Naive thymus-derived CD4-positive, alpha-beta T cell (primary cell): ENCODE measurements at regions of chr12 and their contacts with region 1.

Region 1: DNA sequence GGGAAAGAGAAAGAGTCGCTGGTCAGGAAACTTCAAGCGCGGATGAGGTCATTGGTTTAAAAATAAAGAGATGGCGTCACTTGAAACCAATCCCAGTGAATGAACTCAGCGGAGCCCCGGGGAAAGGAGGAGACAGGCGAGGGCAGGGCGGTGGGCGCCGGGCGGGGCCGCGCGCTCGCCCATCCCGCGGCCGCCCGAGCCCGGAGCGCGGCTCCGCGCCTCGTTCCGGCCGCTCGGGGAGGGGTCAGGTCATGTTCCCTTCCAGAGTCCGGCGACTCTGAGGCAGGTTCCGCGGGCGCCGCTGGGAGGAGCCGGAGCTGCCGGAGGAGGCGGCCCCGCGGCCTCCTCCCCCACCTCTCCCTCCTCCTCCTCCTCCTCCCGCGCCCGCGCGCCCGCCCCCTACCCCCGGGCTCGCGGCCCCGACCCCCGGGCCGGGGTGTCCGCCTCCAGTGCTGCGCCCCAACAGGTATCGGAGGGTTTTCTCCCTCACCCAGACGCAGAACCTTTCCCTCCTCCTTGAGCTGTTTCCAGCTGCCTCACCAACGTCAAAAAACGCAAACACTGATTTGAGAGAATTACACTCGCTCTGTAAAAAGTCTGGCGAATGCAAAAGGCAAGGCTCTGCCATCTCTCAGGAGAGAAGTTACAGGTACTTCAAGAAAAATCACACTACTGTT is at the start of gene DUSP16:
- DNase-seq: peak; percentile 75 to 92 (median 88)
- ATAC-seq: peak; percentile 85
- H3K4me3 ChIP-seq: peak within 1 kb of the TSS; percentile 62
- H3K4me3 Mint-ChIP-seq: peak within 1 kb of the TSS; percentile 87 to 97 (median 92)
- H3K27ac ChIP-seq: peak within 1 kb of the TSS; percentile 92
- H3K27ac Mint-ChIP-seq: peak within 1 kb of the TSS; percentile 94 to 100 (median 99)
- H3K4me1 ChIP-seq: peaks cover 14 to 16% of the 10 kb centered on the region in 2 donors
- H3K4me1 Mint-ChIP-seq: peaks cover 14 to 50% (median 37%) of the 10 kb centered on the region in 7 donors
- H3K27me3 ChIP-seq: no peaks in the 10 kb centered on the region
- H3K27me3 Mint-ChIP-seq: no peaks in the 10 kb centered on the region
- total RNA-seq, gene DUSP16: 26.8 to 42.8 (median 38.9) TPM

Region 2: DNA sequence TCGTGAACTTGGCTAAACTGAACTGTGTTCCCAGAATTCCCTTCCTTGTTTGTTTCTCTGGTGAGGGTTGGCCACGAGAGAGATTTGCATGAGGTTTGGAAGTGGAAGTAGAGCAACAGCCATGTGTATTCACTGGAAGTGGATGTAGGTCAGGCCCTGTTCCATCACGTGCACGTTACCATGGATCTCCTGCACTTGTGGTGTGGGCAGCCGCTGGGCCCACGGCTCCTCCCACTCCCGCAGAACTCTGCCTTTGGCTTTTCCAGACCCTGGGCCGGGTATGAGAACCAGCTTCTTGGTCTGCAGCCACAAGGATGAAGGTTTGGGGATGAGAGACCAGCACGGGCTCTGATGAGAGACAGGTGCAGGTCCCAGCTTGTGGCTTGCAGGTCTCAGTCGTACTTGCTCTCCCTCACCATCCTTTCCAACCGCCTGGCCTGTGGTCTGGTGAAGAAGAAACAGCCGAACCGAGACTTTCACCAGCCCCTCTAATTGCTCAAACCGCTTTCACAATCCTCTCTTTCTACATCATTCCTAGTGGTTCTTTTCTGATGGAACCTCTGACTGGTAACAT is 94.9 kb before region 1 on chr12:
- CTCF ChIA-PET with region 1: interaction called, 4 read pairs
- POLR2A ChIA-PET with region 1: interaction called, 7 read pairs
- intact Hi-C with region 1: loop called in 1 of 2 experiments (anchors 1 kb)
- DNase-seq: peak in 3 of 9 donors; percentile 15 to 37 (median 35)
- ATAC-seq: peak; percentile 38
- H3K4me3 ChIP-seq: no peak overlapping the region
- H3K4me3 Mint-ChIP-seq: peak overlapping the region in 9 of 10 donors; percentile 16 to 70 (median 50)
- H3K27ac ChIP-seq: peak overlapping the region; percentile 75
- H3K27ac Mint-ChIP-seq: peak overlapping the region; percentile 89 to 99 (median 96)
- H3K4me1 ChIP-seq: peaks cover 29 to 39% of the 10 kb centered on the region in 2 donors
- H3K4me1 Mint-ChIP-seq: peaks cover 19 to 63% (median 52%) of the 10 kb centered on the region in 7 donors
- H3K27me3 ChIP-seq: no peaks in the 10 kb centered on the region
- H3K27me3 Mint-ChIP-seq: no peaks in the 10 kb centered on the region

Region 3: GRCh38 chr12:12527820-12528296 is 34.9 kb before region 1 on chr12:
- CTCF ChIA-PET with region 1: no interaction called
- POLR2A ChIA-PET with region 1: no interaction called
- intact Hi-C with region 1: loop called (anchors 1 to 5 kb)
- DNase-seq: peak in 5 of 9 donors; percentile 23 to 38 (median 23)
- ATAC-seq: peak; percentile 53
- H3K4me3 ChIP-seq: no peak overlapping the region
- H3K4me3 Mint-ChIP-seq: peak overlapping the region; percentile 44 to 65 (median 52)
- H3K27ac ChIP-seq: peak overlapping the region; percentile 70
- H3K27ac Mint-ChIP-seq: peak overlapping the region; percentile 80 to 96 (median 90)
- H3K4me1 ChIP-seq: peaks cover 16 to 33% of the 10 kb centered on the region in 2 donors
- H3K4me1 Mint-ChIP-seq: peaks cover 19 to 68% (median 50%) of the 10 kb centered on the region in 7 donors
- H3K27me3 ChIP-seq: no peaks in the 10 kb centered on the region
- H3K27me3 Mint-ChIP-seq: no peaks in the 10 kb centered on the region

Region 4: GRCh38 chr12:12622418-12622817 is 59.7 kb after region 1 on chr12:
- CTCF ChIA-PET with region 1: interaction called, 5 read pairs
- POLR2A ChIA-PET with region 1: interaction called, 4 read pairs
- intact Hi-C with region 1: loop called in 1 of 2 experiments (anchors 1 kb)
- DNase-seq: peak in 7 of 9 donors; percentile 44 to 76 (median 65)
- ATAC-seq: peak; percentile 87
- H3K4me3 ChIP-seq: peak overlapping the region; percentile 29
- H3K4me3 Mint-ChIP-seq: peak overlapping the region; percentile 1 to 79 (median 62)
- H3K27ac ChIP-seq: peak overlapping the region; percentile 72
- H3K27ac Mint-ChIP-seq: peak overlapping the region; percentile 70 to 95 (median 86)
- H3K4me1 ChIP-seq: peaks cover 27 to 40% of the 10 kb centered on the region in 2 donors
- H3K4me1 Mint-ChIP-seq: peaks cover 34 to 91% (median 83%) of the 10 kb centered on the region in 7 donors
- H3K27me3 ChIP-seq: no peaks in the 10 kb centered on the region
- H3K27me3 Mint-ChIP-seq: no peaks in the 10 kb centered on the region

Region 5: GRCh38 chr12:12696562-12697383 is 134.1 kb after region 1 on chr12:
- CTCF ChIA-PET with region 1: no interaction called
- POLR2A ChIA-PET with region 1: interaction called, 6 read pairs
- intact Hi-C with region 1: loop called (anchors 1 kb)
- DNase-seq: peak; percentile 86 to 97 (median 92)
- ATAC-seq: peak; percentile 92
- H3K4me3 ChIP-seq: peak overlapping the region; percentile 63
- H3K4me3 Mint-ChIP-seq: peak overlapping the region; percentile 79 to 99 (median 95)
- H3K27ac ChIP-seq: peak overlapping the region; percentile 93
- H3K27ac Mint-ChIP-seq: peak overlapping the region; percentile 95 to 100 (median 100)
- H3K4me1 ChIP-seq: peaks cover 11 to 16% of the 10 kb centered on the region in 2 donors
- H3K4me1 Mint-ChIP-seq: peaks cover 24 to 63% (median 33%) of the 10 kb centered on the region in 7 donors
- H3K27me3 ChIP-seq: no peaks in the 10 kb centered on the region
- H3K27me3 Mint-ChIP-seq: no peaks in the 10 kb centered on the region

Region 6: GRCh38 chr12:12724661-12725545 is 162.2 kb after region 1 on chr12:
- CTCF ChIA-PET with region 1: no interaction called
- POLR2A ChIA-PET with region 1: interaction called, 11 read pairs
- intact Hi-C with region 1: loop called (anchors 1 kb)
- DNase-seq: peak; percentile 78 to 97 (median 92)
- ATAC-seq: peak; percentile 77
- H3K4me3 ChIP-seq: peak overlapping the region; percentile 53
- H3K4me3 Mint-ChIP-seq: peak overlapping the region; percentile 87 to 98 (median 94)
- H3K27ac ChIP-seq: peak overlapping the region; percentile 99
- H3K27ac Mint-ChIP-seq: peak overlapping the region; percentile 96 to 99 (median 97)
- H3K4me1 ChIP-seq: peaks cover 28% of the 10 kb centered on the region in 2 donors
- H3K4me1 Mint-ChIP-seq: peaks cover 23 to 64% (median 56%) of the 10 kb centered on the region in 7 donors
- H3K27me3 ChIP-seq: no peaks in the 10 kb centered on the region
- H3K27me3 Mint-ChIP-seq: peaks cover 0 to 7% (median 0%) of the 10 kb centered on the region in 5 donors

Region 7: GRCh38 chr12:12813120-12814101 is 250.7 kb after region 1 on chr12 and contains the start of gene DDX47:
- CTCF ChIA-PET with region 1: no interaction called
- POLR2A ChIA-PET with region 1: interaction called, 4 read pairs
- intact Hi-C with region 1: loop called (anchors 2 to 5 kb)
- DNase-seq: peak; percentile 91 to 99 (median 96)
- ATAC-seq: peak; percentile 97
- H3K4me3 ChIP-seq: peak within 1 kb of the TSS; percentile 96
- H3K4me3 Mint-ChIP-seq: peak within 1 kb of the TSS; percentile 89 to 99 (median 96)
- H3K27ac ChIP-seq: peak within 1 kb of the TSS; percentile 99
- H3K27ac Mint-ChIP-seq: peak within 1 kb of the TSS; percentile 84 to 99 (median 97)
- H3K4me1 ChIP-seq: peaks cover 28 to 41% of the 10 kb centered on the region in 2 donors
- H3K4me1 Mint-ChIP-seq: peaks cover 36 to 84% (median 69%) of the 10 kb centered on the region in 7 donors
- H3K27me3 ChIP-seq: no peaks in the 10 kb centered on the region
- H3K27me3 Mint-ChIP-seq: no peaks in the 10 kb centered on the region
- total RNA-seq, gene DDX47: 71.6 to 154 (median 75.5) TPM